CD4-positive, alpha-beta memory T cell (primary cell): ENCODE measurements at regions of chr17 and their contacts with region 1.

Region 1: DNA sequence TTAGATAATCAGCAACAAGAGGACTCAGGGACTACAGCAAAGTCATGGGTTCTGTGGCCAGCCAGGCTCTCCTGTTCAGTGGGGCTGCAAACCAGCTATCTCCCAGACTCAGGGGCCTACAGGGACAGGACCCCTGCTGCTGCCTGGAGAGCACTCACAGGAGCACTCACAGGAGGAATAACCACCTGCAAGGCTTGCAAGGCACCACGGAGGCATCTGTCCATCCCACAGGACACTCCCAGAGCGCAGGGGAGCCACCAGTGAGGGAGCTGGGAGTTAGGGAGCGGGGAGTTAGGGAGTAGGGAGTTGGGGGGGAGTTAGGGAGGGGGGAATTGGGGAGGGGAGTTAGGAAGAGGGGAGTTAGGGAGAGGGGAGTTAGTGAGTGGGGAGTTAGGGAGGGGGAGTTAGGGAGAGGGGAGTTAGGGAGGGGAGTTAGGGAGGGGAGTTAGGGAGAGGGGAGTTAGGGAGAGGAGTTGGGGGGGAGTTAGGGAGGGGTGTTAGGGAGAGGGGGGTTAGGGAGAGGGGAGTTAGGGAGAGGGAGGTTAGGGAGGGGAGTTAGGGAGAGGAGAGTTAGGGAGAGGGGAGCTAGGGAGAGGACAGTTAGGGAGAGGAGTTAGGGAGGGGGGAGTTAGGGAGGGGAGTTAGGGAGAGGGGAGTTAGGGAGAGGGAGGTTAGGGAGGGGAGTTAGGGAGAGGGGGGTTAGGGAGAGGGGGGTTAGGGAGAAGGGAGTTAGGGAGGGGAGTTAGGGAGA is 5.7 kb downstream of the CANT1 start:
- DNase-seq: no peak
- H3K4me3 ChIP-seq: no peak overlapping the region
- H3K4me3 Mint-ChIP-seq: peak overlapping the region in 1 of 8 donors; percentile 25
- H3K27ac ChIP-seq: no peak overlapping the region
- H3K27ac Mint-ChIP-seq: peak overlapping the region in 2 of 7 donors; percentile 36 to 42
- H3K4me1 ChIP-seq: peaks cover 40% of the 10 kb centered on the region
- H3K4me1 Mint-ChIP-seq: peaks cover 37 to 48% (median 44%) of the 10 kb centered on the region in 4 donors
- H3K27me3 ChIP-seq: no peaks in the 10 kb centered on the region
- H3K27me3 Mint-ChIP-seq: no peaks in the 10 kb centered on the region

Region 2: DNA sequence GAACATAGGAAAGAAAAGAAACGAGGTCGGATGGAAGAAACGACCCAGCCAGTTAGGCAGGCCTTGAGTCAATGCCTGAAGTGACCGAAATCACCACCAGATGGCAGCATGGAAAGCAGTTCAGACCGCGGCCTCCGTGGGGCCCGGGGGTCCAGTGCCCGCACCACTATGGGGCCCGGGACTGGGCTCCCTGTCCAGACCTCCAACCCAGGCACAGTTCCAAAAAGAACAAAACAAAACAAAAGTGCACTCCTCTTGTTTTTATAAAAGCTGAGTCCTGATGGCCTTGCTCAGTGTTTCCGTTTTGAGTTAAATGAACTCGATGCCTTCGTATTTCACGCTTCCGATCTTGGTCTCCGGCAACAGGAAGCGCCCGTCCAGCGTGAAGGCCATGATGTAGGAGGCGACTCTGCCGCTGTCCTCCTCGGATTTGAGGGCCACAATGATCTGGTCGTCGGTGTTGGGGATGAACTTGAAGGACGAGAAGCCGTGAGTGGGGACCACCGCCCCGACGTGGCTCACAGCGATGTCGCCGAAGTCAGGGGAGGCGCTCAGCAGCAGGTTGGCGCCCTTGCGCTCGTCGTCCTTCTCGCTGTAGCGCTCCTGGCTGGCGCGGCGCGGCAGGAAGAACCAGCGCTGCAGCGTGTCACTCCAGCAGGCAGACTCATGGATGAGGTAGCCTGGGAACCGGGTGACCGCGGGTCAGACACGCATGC is 10.4 kb before region 1 on chr17:
- CTCF ChIA-PET with region 1: interaction called, 10 read pairs
- POLR2A ChIA-PET with region 1: interaction called, 3 read pairs
- intact Hi-C with region 1: no loop called
- DNase-seq: peak in 4 of 5 donors; percentile 19 to 37 (median 32)
- H3K4me3 ChIP-seq: no peak overlapping the region
- H3K4me3 Mint-ChIP-seq: no peak overlapping the region
- H3K27ac ChIP-seq: no peak overlapping the region
- H3K27ac Mint-ChIP-seq: peak overlapping the region in 4 of 7 donors; percentile 48 to 68 (median 68)
- H3K4me1 ChIP-seq: no peaks in the 10 kb centered on the region
- H3K4me1 Mint-ChIP-seq: peaks cover 3 to 14% (median 8%) of the 10 kb centered on the region in 4 donors
- H3K27me3 ChIP-seq: no peaks in the 10 kb centered on the region
- H3K27me3 Mint-ChIP-seq: no peaks in the 10 kb centered on the region